ENCODE measurements at regions of chr1 and their contacts with region 1.

Region 1: DNA sequence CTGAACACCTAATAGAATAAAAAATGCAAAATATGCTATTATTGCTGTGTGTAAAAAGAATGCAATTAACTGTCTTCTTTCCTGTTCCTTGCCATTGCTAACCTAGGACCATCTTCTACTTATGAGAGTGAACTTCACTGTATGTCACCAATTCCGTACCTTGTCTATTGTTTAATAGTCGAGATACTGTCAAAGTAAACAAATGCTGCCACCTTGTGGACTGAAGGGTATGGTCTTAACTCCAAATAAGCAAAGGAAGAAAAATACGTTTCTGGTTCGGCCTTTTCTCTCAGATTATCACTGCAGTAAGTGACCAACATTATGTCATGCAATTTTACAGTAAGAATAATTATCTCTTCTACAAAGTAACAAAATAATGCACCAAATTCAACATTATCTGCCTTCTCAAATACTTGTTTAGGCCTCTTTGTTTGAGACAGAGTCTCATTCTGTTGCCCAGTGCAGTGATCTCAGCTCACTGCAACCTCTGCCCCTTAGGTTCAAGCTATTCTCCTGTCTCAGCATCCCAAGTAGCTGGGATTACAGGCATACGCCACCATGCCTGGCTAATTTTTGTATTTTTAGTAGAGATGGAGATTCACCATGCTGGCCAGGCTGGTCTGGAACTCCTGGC is 133.4 kb downstream of the COP1 start:
- DNase-seq: peak in 1 of 2 donors; percentile 67
- ATAC-seq: peak in 7 of 8 donors; percentile 38 to 72 (median 68)
- H3K4me3 ChIP-seq: no peak overlapping the region
- H3K27ac ChIP-seq: no peak overlapping the region
- H3K4me1 ChIP-seq: peaks cover 0 to 6% (median 0%) of the 10 kb centered on the region in 9 donors
- H3K27me3 ChIP-seq: no peaks in the 10 kb centered on the region
- CTCF ChIP-seq: peak; percentile 45 to 86 (median 78)

Region 2: GRCh38 chr1:175146529-175147213 is 927.0 kb before region 1 on chr1:
- intact Hi-C with region 1: loop called in 6 of 10 experiments (anchors 5 to 10 kb)
- DNase-seq: peak; percentile 63 to 76
- ATAC-seq: peak; percentile 69 to 86 (median 84)
- H3K4me3 ChIP-seq: peak overlapping the region in 1 of 10 donors; percentile 9
- H3K27ac ChIP-seq: no peak overlapping the region
- H3K4me1 ChIP-seq: peaks cover 0 to 7% (median 0%) of the 10 kb centered on the region in 9 donors
- H3K27me3 ChIP-seq: peaks cover 0 to 3% (median 0%) of the 10 kb centered on the region in 7 donors
- CTCF ChIP-seq: peak; percentile 49 to 88 (median 81)

Region 3: GRCh38 chr1:175373786-175374623 is 699.6 kb before region 1 on chr1:
- intact Hi-C with region 1: loop called in 9 of 10 experiments (anchors 2 to 10 kb)
- DNase-seq: no peak
- ATAC-seq: peak in 6 of 8 donors; percentile 52 to 75 (median 62)
- H3K4me3 ChIP-seq: no peak overlapping the region
- H3K27ac ChIP-seq: no peak overlapping the region
- H3K4me1 ChIP-seq: peaks cover 0 to 4% (median 0%) of the 10 kb centered on the region in 9 donors
- H3K27me3 ChIP-seq: peaks cover 0 to 13% (median 0%) of the 10 kb centered on the region in 7 donors
- CTCF ChIP-seq: peak; percentile 46 to 77 (median 69)

Region 4: GRCh38 chr1:175471039-175471800 is 602.4 kb before region 1 on chr1:
- intact Hi-C with region 1: loop called in 2 of 10 experiments (anchors 10 kb)
- DNase-seq: no peak
- ATAC-seq: no peak
- H3K4me3 ChIP-seq: no peak overlapping the region
- H3K27ac ChIP-seq: no peak overlapping the region
- H3K4me1 ChIP-seq: no peaks in the 10 kb centered on the region
- H3K27me3 ChIP-seq: peaks cover 0 to 15% (median 5%) of the 10 kb centered on the region in 7 donors
- CTCF ChIP-seq: no peak

Region 5: DNA sequence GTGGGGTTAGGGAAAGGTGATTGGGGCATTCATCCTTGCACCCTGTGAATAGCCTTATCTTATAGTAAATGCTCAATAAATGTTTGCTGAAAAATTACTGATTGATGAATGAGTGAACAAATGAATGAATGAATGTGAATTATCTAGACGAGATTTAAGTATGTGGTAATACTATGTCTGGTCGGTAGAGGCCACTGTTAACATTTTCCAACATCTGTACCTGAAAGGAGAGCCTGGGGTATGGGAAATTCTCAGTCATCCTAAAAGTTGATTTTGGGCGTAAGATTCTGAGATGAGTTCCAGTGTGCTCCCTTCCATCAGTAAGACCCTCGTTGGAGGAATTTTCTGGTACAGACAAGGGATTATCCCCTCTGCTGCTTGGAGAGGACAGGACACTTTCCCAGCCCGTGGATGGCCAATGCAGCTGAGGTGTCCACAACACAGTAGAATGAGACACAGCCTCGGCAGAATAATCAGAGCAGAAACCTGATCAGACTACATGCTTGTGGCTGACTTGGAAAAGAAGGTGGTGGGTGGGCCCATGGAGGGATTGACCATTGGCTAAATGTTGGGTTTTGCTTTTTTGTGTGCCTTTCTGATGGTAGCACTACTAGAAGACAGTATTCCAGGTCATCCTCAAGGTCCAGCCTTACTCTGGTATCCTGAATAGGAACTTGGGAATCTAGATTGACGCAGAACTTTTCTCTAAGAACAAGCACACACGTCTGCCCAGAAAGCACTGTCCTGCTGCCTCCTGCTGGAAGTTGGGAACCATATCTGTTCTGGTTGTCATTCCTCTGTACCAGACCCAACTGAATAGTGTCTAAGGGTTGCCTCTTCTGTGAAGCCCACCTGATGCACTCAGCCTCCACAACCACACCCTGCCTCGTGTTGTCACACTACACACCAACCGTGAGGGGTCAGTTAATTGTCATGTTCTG is 592.2 kb before region 1 on chr1:
- intact Hi-C with region 1: loop called in 8 of 10 experiments (anchors 1 to 10 kb)
- DNase-seq: no peak
- ATAC-seq: peak in 5 of 8 donors; percentile 44 to 62 (median 52)
- H3K4me3 ChIP-seq: no peak overlapping the region
- H3K27ac ChIP-seq: no peak overlapping the region
- H3K4me1 ChIP-seq: peaks cover 0 to 4% (median 0%) of the 10 kb centered on the region in 9 donors
- H3K27me3 ChIP-seq: peaks cover 0 to 13% (median 0%) of the 10 kb centered on the region in 7 donors
- CTCF ChIP-seq: peak; percentile 37 to 71 (median 66)

Region 6: GRCh38 chr1:176263278-176263677 is 189.6 kb after region 1 on chr1:
- intact Hi-C with region 1: no loop called
- DNase-seq: no peak
- ATAC-seq: no peak
- H3K4me3 ChIP-seq: no peak overlapping the region
- H3K27ac ChIP-seq: no peak overlapping the region
- H3K4me1 ChIP-seq: no peaks in the 10 kb centered on the region
- H3K27me3 ChIP-seq: no peaks in the 10 kb centered on the region
- CTCF ChIP-seq: no peak